ENCODE measurements at regions of chr6 and their contacts with region 1.

Region 1: DNA sequence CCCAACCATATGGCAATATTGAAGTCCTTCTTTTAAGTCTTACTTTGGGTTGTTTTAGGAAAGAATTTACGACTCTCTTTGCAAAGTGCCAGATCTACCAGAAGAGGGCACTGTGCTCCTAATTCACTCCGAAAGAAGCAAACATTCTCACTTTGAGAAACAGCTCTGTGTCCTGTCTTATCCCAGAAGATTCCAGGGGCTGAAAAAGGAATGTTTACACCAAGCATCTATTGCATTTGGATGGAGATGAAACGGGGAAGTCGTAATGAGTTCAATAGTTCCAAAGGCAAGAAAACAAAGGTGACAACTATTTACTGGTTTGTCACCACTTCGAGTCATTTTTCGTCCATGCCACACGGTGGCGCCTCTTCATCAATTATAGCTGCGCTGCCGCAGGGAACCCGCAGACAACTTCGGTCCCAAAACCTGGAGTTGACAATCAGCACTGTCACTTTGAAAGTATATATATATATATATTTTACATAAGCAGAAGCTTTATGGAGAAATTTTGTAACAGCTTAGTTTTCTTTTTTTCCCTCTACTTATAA is 121.6 kb downstream of the MOXD1 start:
- DNase-seq: peak; percentile 65 to 66
- H3K4me3 ChIP-seq: peak overlapping the region in 1 of 2 donors; percentile 37
- H3K27ac ChIP-seq: peak overlapping the region in 1 of 2 donors; percentile 40
- H3K4me1 ChIP-seq: no peaks in the 10 kb centered on the region
- H3K27me3 ChIP-seq: no peaks in the 10 kb centered on the region
- CTCF ChIP-seq: peak; percentile 79 to 95 (median 86)
- POLR2A ChIP-seq: no peak

Region 2: GRCh38 chr6:132483779-132484679 is 204.4 kb after region 1 on chr6:
- intact Hi-C with region 1: loop called (anchors 10 kb)
- DNase-seq: peak in 1 of 2 donors; percentile 61
- H3K4me3 ChIP-seq: no peak overlapping the region
- H3K27ac ChIP-seq: peak overlapping the region in 1 of 2 donors; percentile 55
- H3K4me1 ChIP-seq: peaks cover 0 to 15% of the 10 kb centered on the region in 2 donors
- H3K27me3 ChIP-seq: no peaks in the 10 kb centered on the region
- CTCF ChIP-seq: peak; percentile 77 to 83 (median 79)
- POLR2A ChIP-seq: no peak